CD8-positive, alpha-beta memory T cell (primary cell): ENCODE measurements at regions of chr2 and their contacts with region 1.

Region 1: DNA sequence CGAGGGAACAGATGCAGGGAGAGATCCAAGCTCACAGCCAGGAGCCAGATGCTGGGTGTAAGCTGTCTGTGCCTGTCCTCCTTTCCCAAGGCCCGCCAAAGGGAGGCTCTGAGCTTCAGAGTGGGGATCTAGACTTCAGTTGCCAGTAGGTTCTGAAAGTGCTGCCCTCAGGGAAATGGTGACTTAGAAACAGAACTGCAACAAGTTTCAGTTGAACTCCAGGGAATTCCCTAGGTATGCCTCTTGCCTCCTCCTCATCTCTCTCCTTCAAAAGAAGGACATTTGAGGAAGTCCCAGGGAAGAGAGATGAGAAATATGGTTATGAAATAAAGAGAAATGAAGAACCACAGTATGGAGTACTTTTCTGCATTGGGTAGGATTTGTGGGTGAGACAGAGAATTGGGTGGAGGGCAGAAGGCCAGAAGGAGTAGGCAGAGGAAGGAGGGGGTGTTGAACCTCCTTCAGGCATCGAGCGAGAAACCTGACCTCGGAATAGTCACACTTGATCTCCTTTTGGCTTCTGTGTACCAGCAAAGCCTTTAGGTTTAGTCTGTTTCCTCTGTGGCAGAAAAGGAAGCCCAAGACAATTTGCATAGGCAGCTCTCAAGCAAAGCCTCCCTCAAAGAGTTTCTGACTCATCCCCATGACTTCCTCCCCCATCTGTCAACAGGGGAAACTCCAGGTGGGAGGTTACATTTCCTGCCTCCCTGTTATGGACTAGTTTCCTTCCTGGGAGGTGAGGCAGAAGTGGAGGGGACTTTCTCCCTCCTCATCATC is 45.7 kb downstream of the QPCT start:
- DNase-seq: peak; percentile 20 to 76 (median 55)
- H3K4me3 ChIP-seq: peak overlapping the region; percentile 41
- H3K4me3 Mint-ChIP-seq: peak overlapping the region in 6 of 7 donors; percentile 21 to 72 (median 42)
- H3K27ac ChIP-seq: no peak overlapping the region
- H3K27ac Mint-ChIP-seq: peak overlapping the region in 6 of 8 donors; percentile 81 to 94 (median 88)
- H3K4me1 ChIP-seq: peaks cover 25% of the 10 kb centered on the region
- H3K4me1 Mint-ChIP-seq: peaks cover 0 to 3% (median 0%) of the 10 kb centered on the region in 3 donors
- H3K27me3 ChIP-seq: no peaks in the 10 kb centered on the region
- H3K27me3 Mint-ChIP-seq: peaks cover 0 to under 1% of the 10 kb centered on the region in 2 donors

Region 2: DNA sequence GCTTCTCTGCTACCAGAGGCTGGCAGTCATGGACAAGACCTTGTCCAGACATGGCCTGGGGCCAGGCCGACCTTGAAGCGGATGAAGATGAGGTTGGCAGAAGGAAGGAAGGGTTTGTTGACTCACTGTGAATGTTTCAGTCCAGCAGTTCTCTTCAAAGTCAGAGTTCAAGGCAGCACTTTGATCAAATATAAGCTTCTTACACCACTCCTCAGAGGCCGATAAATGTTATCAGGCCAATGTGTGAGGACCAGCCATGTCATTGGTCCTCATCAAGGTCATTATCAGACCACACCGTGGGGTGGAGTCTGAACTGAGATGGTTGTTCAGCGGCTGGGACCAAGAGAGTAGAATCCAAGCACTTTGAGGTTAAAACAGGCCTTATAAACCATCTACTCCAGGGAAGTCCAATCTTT is 10.3 kb before region 1 on chr2:
- CTCF ChIA-PET with region 1: interaction called, 15 read pairs
- POLR2A ChIA-PET with region 1: interaction called, 4 read pairs
- DNase-seq: no peak
- H3K4me3 ChIP-seq: no peak overlapping the region
- H3K4me3 Mint-ChIP-seq: no peak overlapping the region
- H3K27ac ChIP-seq: no peak overlapping the region
- H3K27ac Mint-ChIP-seq: no peak overlapping the region
- H3K4me1 ChIP-seq: peaks cover 16% of the 10 kb centered on the region
- H3K4me1 Mint-ChIP-seq: peaks cover 14 to 18% (median 16%) of the 10 kb centered on the region in 3 donors
- H3K27me3 ChIP-seq: peaks cover 23% of the 10 kb centered on the region
- H3K27me3 Mint-ChIP-seq: peaks cover 9 to 30% of the 10 kb centered on the region in 2 donors

Region 3: DNA sequence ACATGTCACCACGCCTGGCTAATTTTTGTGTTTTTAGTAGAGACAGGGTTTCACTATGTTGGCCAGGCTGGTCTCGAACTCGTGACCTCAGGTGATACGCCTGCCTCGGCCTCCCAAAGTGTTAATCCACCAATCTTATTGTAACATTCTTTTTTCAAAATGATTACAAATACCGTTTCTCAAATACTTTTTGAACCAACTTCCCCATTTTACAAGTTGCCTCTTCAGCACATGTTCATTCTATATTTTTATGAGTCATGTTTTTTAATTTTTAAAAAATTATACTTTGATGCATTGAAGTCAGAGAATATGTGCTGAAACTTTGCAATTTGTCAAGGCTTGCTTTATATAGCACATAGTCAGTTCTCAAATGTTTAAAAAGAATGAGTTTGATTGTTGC is 12.5 kb after region 1 on chr2:
- CTCF ChIA-PET with region 1: interaction called, 12 read pairs
- POLR2A ChIA-PET with region 1: no interaction called
- DNase-seq: no peak
- H3K4me3 ChIP-seq: no peak overlapping the region
- H3K4me3 Mint-ChIP-seq: no peak overlapping the region
- H3K27ac ChIP-seq: no peak overlapping the region
- H3K27ac Mint-ChIP-seq: no peak overlapping the region
- H3K4me1 ChIP-seq: no peaks in the 10 kb centered on the region
- H3K4me1 Mint-ChIP-seq: no peaks in the 10 kb centered on the region
- H3K27me3 ChIP-seq: no peaks in the 10 kb centered on the region
- H3K27me3 Mint-ChIP-seq: peaks cover 0 to 12% of the 10 kb centered on the region in 2 donors

Region 4: DNA sequence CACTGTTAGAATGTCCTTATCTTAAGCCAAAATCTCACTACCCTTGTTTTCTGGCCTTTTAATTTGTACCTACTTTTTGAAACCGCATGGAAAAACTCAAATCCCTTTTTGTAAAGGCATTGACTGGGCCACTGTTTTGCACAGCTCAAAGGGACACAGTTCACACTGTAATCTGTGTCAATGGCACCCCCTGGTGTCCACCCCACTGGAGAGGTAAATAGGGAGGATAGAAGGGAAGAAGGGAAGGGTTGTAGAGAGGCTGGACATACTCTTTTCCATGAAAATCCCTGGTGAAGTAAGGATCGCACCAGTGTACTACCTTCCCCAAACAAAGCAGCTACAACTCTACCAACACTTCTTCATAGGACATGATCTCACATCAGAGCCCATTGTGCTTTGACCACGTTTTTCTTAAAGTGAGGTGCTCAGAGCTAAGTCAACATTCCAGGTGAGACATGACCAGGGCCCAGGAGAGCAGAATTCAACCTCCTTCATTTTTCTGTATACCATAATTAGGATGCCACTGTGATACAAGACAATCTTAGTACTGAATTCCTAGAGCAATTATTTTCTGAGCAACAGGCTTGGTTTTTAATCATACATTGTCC is 442.5 kb after region 1 on chr2:
- CTCF ChIA-PET with region 1: interaction called, 69 read pairs
- POLR2A ChIA-PET with region 1: no interaction called
- DNase-seq: peak; percentile 57 to 88 (median 76)
- H3K4me3 ChIP-seq: no peak overlapping the region
- H3K4me3 Mint-ChIP-seq: no peak overlapping the region
- H3K27ac ChIP-seq: no peak overlapping the region
- H3K27ac Mint-ChIP-seq: no peak overlapping the region
- H3K4me1 ChIP-seq: no peaks in the 10 kb centered on the region
- H3K4me1 Mint-ChIP-seq: peaks cover 5 to 14% (median 9%) of the 10 kb centered on the region in 3 donors
- H3K27me3 ChIP-seq: no peaks in the 10 kb centered on the region
- H3K27me3 Mint-ChIP-seq: peaks cover 0 to 3% of the 10 kb centered on the region in 2 donors

Region 5: GRCh38 chr2:37837628-37838328 is 447.6 kb after region 1 on chr2:
- CTCF ChIA-PET with region 1: interaction called, 69 read pairs
- POLR2A ChIA-PET with region 1: no interaction called
- DNase-seq: no peak
- H3K4me3 ChIP-seq: no peak overlapping the region
- H3K4me3 Mint-ChIP-seq: no peak overlapping the region
- H3K27ac ChIP-seq: no peak overlapping the region
- H3K27ac Mint-ChIP-seq: no peak overlapping the region
- H3K4me1 ChIP-seq: no peaks in the 10 kb centered on the region
- H3K4me1 Mint-ChIP-seq: peaks cover 0 to under 1% (median under 1%) of the 10 kb centered on the region in 3 donors
- H3K27me3 ChIP-seq: no peaks in the 10 kb centered on the region
- H3K27me3 Mint-ChIP-seq: peaks cover 1 to 12% of the 10 kb centered on the region in 2 donors

Region 6: DNA sequence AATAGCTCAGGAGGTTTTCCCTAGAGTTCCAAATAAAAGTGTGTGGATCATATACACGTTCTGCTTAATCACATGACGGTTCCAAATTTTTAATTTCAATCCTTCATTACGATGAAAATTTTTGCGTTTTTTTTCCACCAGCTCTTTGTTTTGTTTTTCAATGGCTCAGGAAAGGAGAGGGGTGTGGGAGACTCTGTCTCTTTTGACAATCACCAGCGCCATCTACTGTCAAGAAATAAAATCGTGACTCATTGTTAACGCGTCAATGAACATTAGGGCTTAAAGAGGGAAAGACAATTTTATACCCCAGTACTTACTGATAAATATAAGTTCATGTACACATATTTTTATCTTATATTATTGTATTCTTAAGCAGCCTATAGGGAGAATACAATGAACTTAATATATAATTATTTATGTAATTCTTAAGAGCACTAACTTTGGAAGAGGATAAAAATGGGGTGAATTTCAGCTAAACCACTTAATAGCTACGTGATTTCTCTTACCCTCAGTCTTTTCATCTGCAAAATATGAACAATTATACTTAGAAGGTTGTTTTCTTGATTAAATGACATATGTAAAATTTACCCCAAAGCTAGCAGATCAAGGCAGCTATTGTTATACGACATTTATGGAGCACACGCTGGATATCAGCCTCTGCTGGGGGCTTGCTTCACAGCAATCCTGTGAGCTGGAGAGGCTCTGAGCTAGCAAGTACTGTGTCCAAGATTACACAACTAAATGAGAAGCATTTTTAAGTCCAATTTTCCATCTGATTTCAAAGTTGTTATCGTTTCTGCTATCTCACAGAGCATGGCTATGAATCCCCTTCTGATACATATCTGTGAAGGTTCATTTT is 487.5 kb after region 1 on chr2:
- CTCF ChIA-PET with region 1: interaction called, 76 read pairs
- POLR2A ChIA-PET with region 1: no interaction called
- DNase-seq: peak in 3 of 5 donors; percentile 12 to 45 (median 41)
- H3K4me3 ChIP-seq: no peak overlapping the region
- H3K4me3 Mint-ChIP-seq: no peak overlapping the region
- H3K27ac ChIP-seq: no peak overlapping the region
- H3K27ac Mint-ChIP-seq: no peak overlapping the region
- H3K4me1 ChIP-seq: no peaks in the 10 kb centered on the region
- H3K4me1 Mint-ChIP-seq: no peaks in the 10 kb centered on the region
- H3K27me3 ChIP-seq: no peaks in the 10 kb centered on the region
- H3K27me3 Mint-ChIP-seq: peaks cover 2 to 32% of the 10 kb centered on the region in 2 donors